Activated B cell treated with CpG ODN at 0.5 μM for 24 hours (primary cell): ENCODE measurements at regions of chr21 and their contacts with region 1.

Region 1: GRCh38 chr21:33199516-33200217 is 30.1 kb upstream of the IFNAR2 start:
- DNase-seq: no peak
- ATAC-seq: peak; percentile 88
- H3K4me3 Mint-ChIP-seq: no peak overlapping the region
- H3K27ac Mint-ChIP-seq: peak overlapping the region; percentile 12
- H3K4me1 Mint-ChIP-seq: peaks cover 27% of the 10 kb centered on the region
- H3K27me3 Mint-ChIP-seq: peaks cover 10% of the 10 kb centered on the region
- CTCF ChIP-seq: no peak

Region 2: GRCh38 chr21:32826329-32827167 is 373.1 kb before region 1 on chr21:
- CTCF ChIA-PET with region 1: interaction called, 14 read pairs
- POLR2A ChIA-PET with region 1: no interaction called
- intact Hi-C with region 1: no loop called
- DNase-seq: no peak
- ATAC-seq: peak; percentile 75
- H3K4me3 Mint-ChIP-seq: no peak overlapping the region
- H3K27ac Mint-ChIP-seq: no peak overlapping the region
- H3K4me1 Mint-ChIP-seq: no peaks in the 10 kb centered on the region
- H3K27me3 Mint-ChIP-seq: peaks cover 10% of the 10 kb centered on the region
- CTCF ChIP-seq: no peak

Region 3: DNA sequence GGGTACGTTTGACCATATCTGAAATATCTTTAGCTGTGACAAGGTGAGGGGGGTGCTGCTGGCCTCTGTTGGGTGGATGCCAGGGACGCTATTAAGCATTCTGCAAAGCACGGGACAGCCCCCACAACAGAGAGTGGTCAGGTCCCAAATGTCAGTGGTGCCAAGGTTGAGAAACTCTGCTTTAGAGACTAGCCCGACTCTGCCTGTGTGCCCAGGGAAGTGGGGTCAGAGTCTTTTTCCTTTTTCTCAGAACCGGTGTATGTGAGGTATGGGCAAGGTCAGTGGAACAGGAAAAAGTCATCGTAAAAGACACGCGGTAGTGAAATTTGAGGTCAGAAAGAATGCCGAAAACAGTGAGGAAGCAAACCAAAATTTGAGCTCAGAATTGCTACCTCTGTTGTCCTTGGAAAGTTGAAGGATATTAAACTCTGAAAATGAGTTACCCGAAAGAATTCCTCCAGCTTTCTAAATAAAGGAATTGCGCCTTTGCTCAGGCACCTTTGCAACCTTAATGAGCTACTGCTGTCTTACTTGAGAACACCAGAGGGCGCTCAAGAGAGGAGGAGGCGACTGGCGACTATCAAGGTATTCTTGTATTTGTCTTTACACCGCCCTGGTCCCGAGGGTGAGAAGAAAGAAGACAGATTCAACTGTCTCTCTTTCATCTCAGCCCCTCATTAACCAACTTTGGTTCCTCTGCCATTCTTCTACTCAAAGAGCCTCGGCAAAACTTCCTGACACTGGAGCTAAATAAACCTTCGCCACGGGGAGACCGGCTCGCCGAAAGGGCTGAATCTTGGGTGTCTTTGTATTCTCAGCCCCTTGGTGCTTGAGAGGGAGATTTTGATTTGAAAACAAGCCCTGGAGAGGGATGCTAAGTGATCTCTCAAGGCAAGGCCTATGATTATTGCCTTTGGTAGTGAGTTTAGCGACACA is 259.3 kb before region 1 on chr21:
- CTCF ChIA-PET with region 1: interaction called, 42 read pairs
- POLR2A ChIA-PET with region 1: no interaction called
- intact Hi-C with region 1: loop called (anchors 1 kb)
- DNase-seq: no peak
- ATAC-seq: no peak
- H3K4me3 Mint-ChIP-seq: no peak overlapping the region
- H3K27ac Mint-ChIP-seq: no peak overlapping the region
- H3K4me1 Mint-ChIP-seq: no peaks in the 10 kb centered on the region
- H3K27me3 Mint-ChIP-seq: peaks cover 9% of the 10 kb centered on the region
- CTCF ChIP-seq: no peak

Region 4: DNA sequence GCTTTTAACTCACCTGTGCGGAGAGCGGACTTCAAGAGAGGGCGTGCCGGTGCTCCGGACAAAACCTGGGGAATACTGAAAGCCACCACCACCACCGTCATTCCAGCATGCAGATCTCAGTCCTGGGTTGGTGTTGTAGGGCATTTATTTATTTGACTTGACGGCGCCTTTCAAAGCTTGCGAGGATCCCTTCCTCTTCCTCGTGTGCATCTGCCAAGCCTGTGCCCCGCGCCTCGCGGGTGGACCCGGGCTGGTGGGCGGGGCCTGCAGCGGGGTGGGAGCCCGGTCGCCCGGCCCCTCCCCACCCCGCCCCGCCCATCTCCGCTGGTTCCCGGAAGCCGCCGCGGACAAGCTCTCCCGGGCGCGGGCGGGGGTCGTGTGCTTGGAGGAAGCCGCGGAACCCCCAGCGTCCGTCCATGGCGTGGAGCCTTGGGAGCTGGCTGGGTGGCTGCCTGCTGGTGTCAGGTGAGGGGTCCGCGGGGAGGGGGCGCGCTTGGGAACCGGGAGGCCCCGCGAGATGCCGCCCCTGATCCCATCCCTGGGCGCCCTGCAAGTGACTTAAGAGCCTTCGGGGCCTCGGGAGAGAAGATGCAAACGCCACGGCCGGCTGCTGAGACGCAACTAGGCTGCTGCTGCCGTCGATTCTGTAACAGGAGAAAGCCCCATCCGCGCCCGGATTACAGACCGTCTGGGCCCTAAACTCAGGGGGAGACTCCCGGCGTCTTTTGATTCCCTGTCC is 66.6 kb after region 1 on chr21 and contains the start of gene IL10RB:
- CTCF ChIA-PET with region 1: interaction called, 11 read pairs
- POLR2A ChIA-PET with region 1: interaction called, 27 read pairs
- intact Hi-C with region 1: loop called (anchors 1 kb)
- DNase-seq: peak; percentile 71
- ATAC-seq: peak; percentile 74
- H3K4me3 Mint-ChIP-seq: peak within 1 kb of the TSS; percentile 92
- H3K27ac Mint-ChIP-seq: peak within 1 kb of the TSS; percentile 95
- H3K4me1 Mint-ChIP-seq: peaks cover 66% of the 10 kb centered on the region
- H3K27me3 Mint-ChIP-seq: no peaks in the 10 kb centered on the region
- CTCF ChIP-seq: no peak
- total RNA-seq, gene IL10RB: 36.7 and 37.9 TPM in 2 replicates

Region 5: GRCh38 chr21:33403779-33404585 is 204.3 kb after region 1 on chr21:
- CTCF ChIA-PET with region 1: interaction called, 3 read pairs
- POLR2A ChIA-PET with region 1: interaction called, 5 read pairs
- intact Hi-C with region 1: loop called (anchors 1 kb)
- DNase-seq: peak; percentile 39
- ATAC-seq: peak; percentile 43
- H3K4me3 Mint-ChIP-seq: peak overlapping the region; percentile 95
- H3K27ac Mint-ChIP-seq: peak overlapping the region; percentile 94
- H3K4me1 Mint-ChIP-seq: peaks cover 80% of the 10 kb centered on the region
- H3K27me3 Mint-ChIP-seq: no peaks in the 10 kb centered on the region
- CTCF ChIP-seq: no peak

Region 6: GRCh38 chr21:33542640-33543504 is 343.2 kb after region 1 on chr21 and contains the start of gene SON:
- CTCF ChIA-PET with region 1: no interaction called
- POLR2A ChIA-PET with region 1: no interaction called
- intact Hi-C with region 1: loop called (anchors 5 kb)
- DNase-seq: peak; percentile 86
- ATAC-seq: peak; percentile 88
- H3K4me3 Mint-ChIP-seq: peak within 1 kb of the TSS; percentile 98
- H3K27ac Mint-ChIP-seq: peak within 1 kb of the TSS; percentile 100
- H3K4me1 Mint-ChIP-seq: peaks cover 48% of the 10 kb centered on the region
- H3K27me3 Mint-ChIP-seq: no peaks in the 10 kb centered on the region
- CTCF ChIP-seq: no peak
- total RNA-seq, gene SON: 429 and 474 TPM in 2 replicates